ENCODE measurements at regions of chr3 and their contacts with region 1.

Region 1: DNA sequence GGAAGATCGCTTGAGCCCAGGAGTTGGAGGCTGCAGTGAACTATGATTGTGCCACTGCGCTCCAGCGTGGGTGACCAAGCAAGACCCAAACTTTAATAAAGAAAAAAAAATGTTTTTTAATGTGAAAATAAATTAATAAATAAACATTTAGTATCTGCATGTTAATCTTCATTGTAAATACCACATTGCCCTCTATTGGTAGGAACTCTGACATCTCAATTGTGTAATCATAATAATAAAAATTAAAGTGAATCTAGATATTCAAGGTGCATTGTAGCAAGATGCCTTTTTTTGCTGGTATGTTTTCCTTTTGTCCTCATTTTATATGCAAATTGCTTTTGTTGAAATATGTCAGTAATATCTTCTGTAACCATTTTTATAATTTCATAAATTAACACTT is 95.0 kb upstream of the LIMD1 start:
- DNase-seq: peak; percentile 38
- CTCF ChIP-seq: no peak

Region 2: GRCh38 chr3:45210308-45211041 is 289.1 kb before region 1 on chr3:
- in situ Hi-C with region 1: loop called (anchors 10 kb)
- DNase-seq: peak; percentile 68
- CTCF ChIP-seq: peak; percentile 44

Region 3: GRCh38 chr3:45367453-45367871 is 132.1 kb before region 1 on chr3:
- in situ Hi-C with region 1: no loop called
- DNase-seq: no peak
- CTCF ChIP-seq: no peak

Measured in GM13976 (cell line).